SK-N-SH (cell line): ENCODE measurements at regions of chr1 and their contacts with region 1.

Region 1: GRCh38 chr1:36609241-36610027 is 126.7 kb upstream of the CSF3R start:
- DNase-seq: peak; percentile 81
- H3K4me3 ChIP-seq: peak overlapping the region in 1 of 2 experiments; percentile 55; a peak in 1 of 4 replicates
- H3K27ac ChIP-seq: no peak overlapping the region
- H3K4me1 ChIP-seq: no peaks in the 10 kb centered on the region
- H3K27me3 ChIP-seq: no peaks in the 10 kb centered on the region
- CTCF ChIP-seq: peak; percentile 66
- EP300 ChIP-seq: no peak
- RAD21 ChIP-seq: peak; percentile 81

Region 2: DNA sequence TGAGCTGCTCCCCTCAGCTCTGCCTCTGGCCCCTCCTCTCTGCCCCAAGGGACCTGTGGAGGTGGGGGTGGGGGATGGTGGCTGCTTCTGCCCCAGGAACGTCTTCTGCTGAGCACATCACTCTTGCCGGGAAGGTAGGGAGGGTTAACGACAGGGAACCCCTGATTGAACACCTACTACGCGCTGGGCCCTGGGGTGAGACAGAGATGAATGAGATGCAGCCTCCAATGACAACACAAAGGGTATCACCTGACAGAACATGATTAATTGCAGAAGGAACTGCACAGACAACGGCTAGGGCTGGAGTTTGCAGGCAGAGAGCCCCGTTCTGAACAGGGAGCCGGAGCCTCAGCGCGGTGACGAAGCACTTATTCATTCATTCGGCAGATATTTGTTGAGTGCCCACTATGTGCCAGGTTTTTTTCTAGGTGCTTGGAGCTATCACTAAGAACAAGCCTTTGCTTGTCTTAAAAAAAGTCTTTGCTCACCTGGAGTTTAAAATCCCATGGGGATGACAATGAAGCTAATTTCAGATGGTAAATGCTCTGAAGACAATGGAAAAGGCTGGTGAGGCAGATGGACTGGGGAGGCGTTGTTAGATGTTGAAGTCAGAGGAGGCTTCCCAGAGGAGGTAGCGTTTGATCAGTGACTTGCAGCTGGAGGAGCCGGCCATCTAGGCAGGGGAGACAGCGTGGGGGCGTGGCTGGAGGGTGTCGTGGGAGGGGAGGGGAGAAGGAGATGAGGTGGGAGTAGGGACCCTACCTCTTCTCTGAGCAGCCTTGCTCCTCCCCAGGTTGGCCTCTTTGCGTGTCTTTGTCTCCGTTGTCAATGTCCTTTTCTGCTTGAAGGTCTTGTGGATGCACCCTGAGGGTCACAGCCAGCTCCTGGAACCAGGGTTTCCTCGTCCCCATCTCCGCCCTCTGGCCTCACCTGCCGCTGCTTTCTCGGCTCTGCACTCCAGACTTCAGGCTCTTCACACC is 23.6 kb before region 1 on chr1:
- CTCF ChIA-PET with region 1: interaction called, 12 read pairs
- POLR2A ChIA-PET with region 1: no interaction called
- DNase-seq: no peak
- H3K4me3 ChIP-seq: no peak overlapping the region
- H3K27ac ChIP-seq: no peak overlapping the region
- H3K4me1 ChIP-seq: no peaks in the 10 kb centered on the region
- H3K27me3 ChIP-seq: no peaks in the 10 kb centered on the region
- CTCF ChIP-seq: no peak
- EP300 ChIP-seq: no peak
- RAD21 ChIP-seq: no peak

Region 3: DNA sequence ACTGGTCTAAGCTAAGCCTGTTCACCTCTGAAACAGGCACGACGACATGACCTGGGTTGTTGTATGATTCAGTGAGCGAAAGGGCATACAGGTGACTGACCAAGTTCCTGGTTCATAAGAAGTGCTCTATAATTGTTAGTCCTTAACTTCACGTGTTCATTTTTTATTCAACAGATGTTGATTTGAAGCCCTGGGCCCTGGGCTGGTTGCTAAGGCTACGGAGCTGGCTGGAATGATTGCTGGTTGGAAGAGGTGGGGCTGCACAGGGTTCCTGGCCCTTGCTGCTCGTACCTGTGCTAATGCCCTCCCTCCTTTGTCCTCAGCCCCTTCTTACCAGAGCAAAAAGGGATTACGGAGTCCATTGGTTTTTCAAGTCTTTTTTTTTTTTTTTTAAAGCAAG is 15.4 kb before region 1 on chr1:
- CTCF ChIA-PET with region 1: interaction called, 33 read pairs
- POLR2A ChIA-PET with region 1: no interaction called
- DNase-seq: no peak
- H3K4me3 ChIP-seq: no peak overlapping the region
- H3K27ac ChIP-seq: no peak overlapping the region
- H3K4me1 ChIP-seq: no peaks in the 10 kb centered on the region
- H3K27me3 ChIP-seq: no peaks in the 10 kb centered on the region; the same call in 1 of the 2 replicates
- CTCF ChIP-seq: no peak
- EP300 ChIP-seq: no peak
- RAD21 ChIP-seq: no peak

Region 4: GRCh38 chr1:36621531-36621930 is 12.1 kb after region 1 on chr1:
- CTCF ChIA-PET with region 1: interaction called, 10 read pairs
- POLR2A ChIA-PET with region 1: no interaction called
- DNase-seq: no peak
- H3K4me3 ChIP-seq: no peak overlapping the region
- H3K27ac ChIP-seq: no peak overlapping the region
- H3K4me1 ChIP-seq: no peaks in the 10 kb centered on the region; a peak in 1 of 4 replicates
- H3K27me3 ChIP-seq: no peaks in the 10 kb centered on the region
- CTCF ChIP-seq: no peak
- EP300 ChIP-seq: no peak
- RAD21 ChIP-seq: no peak

Region 5: DNA sequence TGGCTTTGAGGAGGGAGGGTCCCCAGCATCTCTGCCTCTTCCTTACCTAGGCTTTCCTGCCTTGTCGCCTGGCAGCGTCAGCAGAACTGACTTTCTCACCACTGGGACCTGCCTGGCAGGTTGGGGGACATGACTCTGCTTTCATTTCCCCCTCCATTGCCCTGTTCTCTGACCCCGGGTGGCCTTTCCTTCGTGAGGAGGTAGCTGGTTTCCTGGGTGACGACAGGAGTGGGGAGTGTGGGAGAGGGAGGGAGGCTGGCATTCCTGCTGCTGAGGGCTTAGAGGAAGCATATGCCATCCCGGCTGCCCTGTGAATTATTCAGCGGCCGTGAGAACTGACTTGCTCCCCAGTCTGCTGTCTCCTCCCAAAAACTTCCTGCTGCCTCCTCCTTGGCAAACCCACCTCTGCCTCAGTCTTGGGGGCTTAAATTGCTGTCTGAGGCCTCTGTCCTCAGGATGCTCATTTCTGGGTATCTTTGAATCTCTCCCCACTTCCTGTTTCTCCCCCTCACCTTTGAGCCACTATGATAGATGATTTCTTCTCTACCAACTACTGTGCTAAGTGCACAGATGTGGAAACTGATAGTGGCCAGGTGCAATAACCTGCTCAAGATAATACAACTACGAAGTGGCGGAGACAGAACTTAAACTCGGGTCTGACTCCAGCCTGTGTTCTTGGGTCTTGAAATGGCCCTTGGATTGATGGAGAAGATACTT is 55.3 kb after region 1 on chr1:
- CTCF ChIA-PET with region 1: no interaction called
- POLR2A ChIA-PET with region 1: no interaction called
- DNase-seq: no peak
- H3K4me3 ChIP-seq: no peak overlapping the region
- H3K27ac ChIP-seq: no peak overlapping the region
- H3K4me1 ChIP-seq: no peaks in the 10 kb centered on the region
- H3K27me3 ChIP-seq: no peaks in the 10 kb centered on the region
- CTCF ChIP-seq: no peak
- EP300 ChIP-seq: no peak
- RAD21 ChIP-seq: no peak